A673 (cell line): ENCODE measurements at regions of chr4 and their contacts with region 1.

Region 1: DNA sequence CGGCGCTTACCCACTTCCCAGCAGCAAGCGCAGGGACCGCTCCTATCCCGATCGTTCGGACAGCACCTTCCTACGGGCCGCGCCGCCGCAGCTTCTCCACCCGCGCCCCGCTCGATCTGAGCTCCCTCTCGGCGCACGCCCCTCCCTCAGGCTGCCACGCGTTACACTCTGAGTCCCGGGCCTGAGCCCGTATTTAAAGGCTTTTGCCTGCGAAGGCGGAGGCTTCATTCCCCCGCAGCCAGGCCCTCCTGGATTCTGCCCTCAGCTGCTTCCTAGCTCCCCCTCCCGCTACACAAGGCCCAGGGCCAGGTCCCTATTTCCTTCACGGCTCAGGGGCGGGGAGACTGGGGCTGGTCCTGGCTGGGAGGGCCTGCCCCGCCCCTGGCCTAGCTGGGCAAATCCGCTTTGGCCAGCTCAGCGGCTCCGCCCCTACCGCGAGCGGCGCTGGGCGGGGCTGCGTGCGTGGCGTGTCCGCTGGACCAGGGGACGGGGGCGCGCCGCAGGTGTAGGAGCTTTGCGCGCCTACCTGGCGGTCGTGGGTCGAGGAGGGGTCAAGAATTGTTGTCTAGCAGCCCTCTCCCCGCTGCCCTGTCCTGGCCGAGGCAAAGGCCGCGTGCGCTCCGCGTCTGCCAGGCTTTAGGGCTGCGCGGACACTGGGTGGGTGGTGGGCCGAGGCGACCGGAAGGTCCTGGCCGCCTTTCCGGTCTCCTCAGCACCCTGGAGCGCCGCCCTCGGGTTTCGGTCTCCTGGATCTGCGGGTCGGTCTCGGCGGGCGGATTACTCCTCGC is at the start of gene UGDH:
- DNase-seq: peak; percentile 99
- H3K4me3 ChIP-seq: peak within 1 kb of the TSS; percentile 84
- H3K27ac ChIP-seq: peak within 1 kb of the TSS; percentile 78
- H3K4me1 ChIP-seq: peaks cover 4% of the 10 kb centered on the region
- H3K27me3 ChIP-seq: no peaks in the 10 kb centered on the region
- CTCF ChIP-seq: no peak
- total RNA-seq, gene UGDH: 52.5 and 62.1 TPM in 2 replicates

Region 2: DNA sequence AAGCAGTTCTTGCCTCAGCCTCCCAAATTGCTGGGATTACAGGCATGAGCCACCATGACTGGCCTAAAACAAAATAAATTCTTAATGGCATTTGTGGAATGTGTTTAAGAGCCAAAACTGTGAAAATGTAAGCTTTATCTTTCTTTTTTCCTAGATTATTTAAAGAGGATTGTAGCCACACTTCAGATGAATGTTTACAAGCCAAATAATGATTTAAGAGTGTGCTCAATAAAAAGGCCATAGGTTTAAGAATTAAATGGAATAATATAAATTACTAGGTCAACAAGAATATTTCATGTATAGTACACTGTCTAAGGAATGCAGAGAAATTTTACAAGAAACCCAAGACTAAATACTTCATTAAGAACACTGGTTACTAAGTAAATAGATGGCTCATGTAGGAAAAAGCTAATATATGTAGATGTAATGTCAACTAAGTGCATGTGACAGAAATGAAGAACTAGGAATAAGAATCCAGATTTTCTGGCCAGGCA is 21.0 kb after region 1 on chr4:
- CTCF ChIA-PET with region 1: no interaction called
- POLR2A ChIA-PET with region 1: interaction called, 11 read pairs
- intact Hi-C with region 1: no loop called
- DNase-seq: no peak
- H3K4me3 ChIP-seq: no peak overlapping the region
- H3K27ac ChIP-seq: no peak overlapping the region
- H3K4me1 ChIP-seq: no peaks in the 10 kb centered on the region
- H3K27me3 ChIP-seq: no peaks in the 10 kb centered on the region
- CTCF ChIP-seq: no peak

Region 3: DNA sequence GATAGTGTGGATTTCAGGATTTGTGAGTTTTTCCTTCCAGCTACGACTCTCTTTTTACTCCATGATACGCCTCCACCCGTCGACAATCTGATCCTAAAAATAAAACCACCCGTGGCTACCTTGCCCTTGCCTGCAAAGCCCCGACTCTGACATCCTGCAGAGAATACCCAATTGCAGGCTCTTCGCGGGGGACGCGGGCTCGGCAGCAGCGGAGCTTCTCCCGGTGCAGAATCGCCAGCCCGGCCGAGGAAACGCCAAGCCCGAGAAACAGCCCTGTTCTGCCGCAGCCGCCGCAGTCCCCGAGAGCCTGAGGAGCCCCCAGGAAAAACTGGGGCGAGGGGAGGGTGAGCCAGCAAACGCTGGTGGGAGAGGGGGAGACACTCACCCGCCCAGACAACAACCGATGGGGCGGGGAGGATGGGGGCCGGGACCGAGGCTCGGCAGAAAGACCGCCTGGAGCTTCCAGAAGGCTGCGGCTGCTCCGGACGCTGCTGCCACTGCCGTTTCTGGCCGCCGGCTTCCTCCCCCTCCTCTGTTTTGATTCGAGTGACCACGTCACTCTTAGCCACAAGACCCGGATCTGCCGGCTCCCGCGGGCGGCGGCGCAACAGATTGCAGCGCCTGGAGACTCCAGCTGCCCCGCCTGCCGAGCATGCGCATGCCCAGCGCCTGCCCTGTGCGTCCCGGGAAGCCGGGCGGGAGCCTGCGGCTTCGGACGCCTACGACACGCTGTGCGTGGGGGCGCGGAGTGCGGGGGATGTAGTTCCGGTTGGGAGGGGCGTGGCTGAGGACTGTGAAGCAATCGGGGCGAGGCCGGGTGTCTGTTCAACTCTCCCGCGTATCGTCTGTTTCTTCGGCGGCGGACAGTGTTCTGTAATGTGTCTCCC is 111.1 kb after region 1 on chr4 and contains the start of gene SMIM14:
- CTCF ChIA-PET with region 1: no interaction called
- POLR2A ChIA-PET with region 1: no interaction called
- intact Hi-C with region 1: loop called (anchors 5 kb)
- DNase-seq: peak; percentile 99
- H3K4me3 ChIP-seq: peak within 1 kb of the TSS; percentile 95
- H3K27ac ChIP-seq: peak within 1 kb of the TSS; percentile 91
- H3K4me1 ChIP-seq: peaks cover 10% of the 10 kb centered on the region
- H3K27me3 ChIP-seq: no peaks in the 10 kb centered on the region
- CTCF ChIP-seq: no peak
- total RNA-seq, gene SMIM14: 14.4 and 14.5 TPM in 2 replicates